K562 (cell line): ENCODE measurements at regions of chr6 and their contacts with region 1.

Region 1: GRCh38 chr6:134882426-134883038 is 67.4 kb downstream of the ALDH8A1 start:
- DNase-seq: peak; percentile 35 to 62 (median 46)
- ATAC-seq: peak; percentile 87
- H3K4me3 ChIP-seq: no peak overlapping the region
- H3K27ac ChIP-seq: no peak overlapping the region
- H3K4me1 ChIP-seq: no peaks in the 10 kb centered on the region
- H3K27me3 ChIP-seq: no peaks in the 10 kb centered on the region; a peak in 5 of 5 replicates
- CTCF ChIP-seq: peak; percentile 79 to 89 (median 82)
- EP300 ChIP-seq: no peak
- POLR2A ChIP-seq: no peak
- RAD21 ChIP-seq: peak; percentile 77 to 87

Region 2: DNA sequence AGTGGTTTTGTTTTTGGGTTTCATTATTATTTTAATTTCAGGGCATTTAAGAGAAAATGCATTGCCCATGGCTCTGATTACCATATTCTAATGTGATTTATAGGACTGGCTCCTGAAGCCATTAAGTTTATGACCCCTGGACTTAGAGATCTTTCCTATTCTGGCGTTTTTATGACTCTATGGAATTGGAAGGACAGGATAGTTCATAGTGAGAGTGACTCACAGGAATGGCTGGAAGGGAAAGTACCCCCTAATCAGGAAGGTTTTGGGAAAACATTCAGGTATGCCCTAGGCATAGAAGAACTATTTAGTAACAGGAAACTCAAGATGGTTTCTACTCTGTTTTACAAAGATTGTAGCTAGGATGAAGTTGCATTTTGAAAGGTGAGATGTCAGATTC is 721.5 kb before region 1 on chr6:
- CTCF ChIA-PET with region 1: interaction called, 10 read pairs
- POLR2A ChIA-PET with region 1: no interaction called
- in situ Hi-C with region 1: no loop called
- intact Hi-C with region 1: loop called (anchors 1 kb)
- DNase-seq: no peak
- ATAC-seq: no peak; the same call in 2 of the 3 replicates
- H3K4me3 ChIP-seq: no peak overlapping the region
- H3K27ac ChIP-seq: no peak overlapping the region
- H3K4me1 ChIP-seq: no peaks in the 10 kb centered on the region
- H3K27me3 ChIP-seq: no peaks in the 10 kb centered on the region
- CTCF ChIP-seq: no peak
- EP300 ChIP-seq: no peak
- POLR2A ChIP-seq: no peak
- RAD21 ChIP-seq: no peak

Region 3: GRCh38 chr6:134956676-134957075 is 74.1 kb after region 1 on chr6:
- CTCF ChIA-PET with region 1: no interaction called
- POLR2A ChIA-PET with region 1: no interaction called
- in situ Hi-C with region 1: no loop called
- intact Hi-C with region 1: no loop called
- DNase-seq: no peak
- ATAC-seq: no peak
- H3K4me3 ChIP-seq: no peak overlapping the region
- H3K27ac ChIP-seq: no peak overlapping the region
- H3K4me1 ChIP-seq: no peaks in the 10 kb centered on the region
- H3K27me3 ChIP-seq: no peaks in the 10 kb centered on the region
- CTCF ChIP-seq: no peak
- EP300 ChIP-seq: no peak
- POLR2A ChIP-seq: no peak
- RAD21 ChIP-seq: no peak